CD4-positive, alpha-beta memory T cell (primary cell): ENCODE measurements at regions of chr12 and their contacts with region 1.

Region 1: GRCh38 chr12:112382232-112382796 is at the start of gene HECTD4:
- DNase-seq: peak; percentile 87 to 91 (median 88)
- H3K4me3 ChIP-seq: peak within 1 kb of the TSS; percentile 73 to 94
- H3K4me3 Mint-ChIP-seq: peak within 1 kb of the TSS; percentile 92 to 96 (median 96)
- H3K27ac ChIP-seq: peak within 1 kb of the TSS; percentile 59
- H3K27ac Mint-ChIP-seq: peak within 1 kb of the TSS; percentile 86 to 95 (median 94)
- H3K4me1 ChIP-seq: peaks cover 18% of the 10 kb centered on the region
- H3K4me1 Mint-ChIP-seq: peaks cover 18 to 28% (median 24%) of the 10 kb centered on the region in 4 donors
- H3K27me3 ChIP-seq: no peaks in the 10 kb centered on the region
- H3K27me3 Mint-ChIP-seq: peaks cover 0 to under 1% of the 10 kb centered on the region in 2 donors
- total RNA-seq, gene HECTD4: 51.8 to 61.3 TPM

Region 2: DNA sequence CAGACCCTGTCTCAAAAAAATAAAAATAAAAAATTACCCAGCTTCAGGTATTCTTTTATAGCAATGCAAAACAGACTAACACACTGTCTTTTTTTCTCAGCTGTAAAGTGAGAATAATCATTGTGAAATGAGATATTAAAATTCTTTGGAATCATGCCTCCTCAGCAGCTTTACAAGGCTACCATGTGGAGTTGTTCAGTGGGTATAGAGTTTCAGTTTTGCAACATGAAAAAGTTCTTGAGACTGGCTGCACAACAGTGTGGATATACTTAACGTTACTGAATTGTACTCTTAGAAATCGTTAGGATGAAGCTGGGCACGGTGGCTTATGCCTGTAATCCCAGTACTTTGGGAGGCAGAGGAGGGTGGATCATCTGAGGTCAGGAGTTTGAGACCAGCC is 556.0 kb before region 1 on chr12:
- CTCF ChIA-PET with region 1: interaction called, 5 read pairs
- POLR2A ChIA-PET with region 1: no interaction called
- intact Hi-C with region 1: loop called (anchors 1 kb)
- DNase-seq: no peak
- H3K4me3 ChIP-seq: no peak overlapping the region
- H3K4me3 Mint-ChIP-seq: no peak overlapping the region
- H3K27ac ChIP-seq: no peak overlapping the region
- H3K27ac Mint-ChIP-seq: no peak overlapping the region
- H3K4me1 ChIP-seq: no peaks in the 10 kb centered on the region
- H3K4me1 Mint-ChIP-seq: peaks cover 0 to 4% (median 0%) of the 10 kb centered on the region in 4 donors
- H3K27me3 ChIP-seq: no peaks in the 10 kb centered on the region
- H3K27me3 Mint-ChIP-seq: peaks cover 3 to 23% of the 10 kb centered on the region in 2 donors

Region 3: GRCh38 chr12:111942557-111942956 is 439.8 kb before region 1 on chr12:
- CTCF ChIA-PET with region 1: no interaction called
- POLR2A ChIA-PET with region 1: no interaction called
- intact Hi-C with region 1: loop called (anchors 1 kb)
- DNase-seq: no peak
- H3K4me3 ChIP-seq: no peak overlapping the region
- H3K4me3 Mint-ChIP-seq: no peak overlapping the region
- H3K27ac ChIP-seq: no peak overlapping the region
- H3K27ac Mint-ChIP-seq: peak overlapping the region in 1 of 7 donors; percentile 46
- H3K4me1 ChIP-seq: peaks cover 16% of the 10 kb centered on the region
- H3K4me1 Mint-ChIP-seq: peaks cover 8 to 17% (median 11%) of the 10 kb centered on the region in 4 donors
- H3K27me3 ChIP-seq: no peaks in the 10 kb centered on the region
- H3K27me3 Mint-ChIP-seq: no peaks in the 10 kb centered on the region

Region 4: GRCh38 chr12:112108201-112109079 is 273.9 kb before region 1 on chr12 and contains the start of gene NAA25:
- CTCF ChIA-PET with region 1: no interaction called
- POLR2A ChIA-PET with region 1: no interaction called
- intact Hi-C with region 1: loop called (anchors 10 kb)
- DNase-seq: peak; percentile 84 to 86 (median 84)
- H3K4me3 ChIP-seq: peak within 1 kb of the TSS; percentile 97 to 99
- H3K4me3 Mint-ChIP-seq: peak within 1 kb of the TSS; percentile 97 to 99 (median 98)
- H3K27ac ChIP-seq: peak within 1 kb of the TSS; percentile 94
- H3K27ac Mint-ChIP-seq: peak within 1 kb of the TSS; percentile 96 to 99 (median 97)
- H3K4me1 ChIP-seq: peaks cover 38% of the 10 kb centered on the region
- H3K4me1 Mint-ChIP-seq: peaks cover 29 to 57% (median 44%) of the 10 kb centered on the region in 4 donors
- H3K27me3 ChIP-seq: no peaks in the 10 kb centered on the region
- H3K27me3 Mint-ChIP-seq: no peaks in the 10 kb centered on the region
- total RNA-seq, gene NAA25: 28.7 to 35.3 TPM

Region 5: DNA sequence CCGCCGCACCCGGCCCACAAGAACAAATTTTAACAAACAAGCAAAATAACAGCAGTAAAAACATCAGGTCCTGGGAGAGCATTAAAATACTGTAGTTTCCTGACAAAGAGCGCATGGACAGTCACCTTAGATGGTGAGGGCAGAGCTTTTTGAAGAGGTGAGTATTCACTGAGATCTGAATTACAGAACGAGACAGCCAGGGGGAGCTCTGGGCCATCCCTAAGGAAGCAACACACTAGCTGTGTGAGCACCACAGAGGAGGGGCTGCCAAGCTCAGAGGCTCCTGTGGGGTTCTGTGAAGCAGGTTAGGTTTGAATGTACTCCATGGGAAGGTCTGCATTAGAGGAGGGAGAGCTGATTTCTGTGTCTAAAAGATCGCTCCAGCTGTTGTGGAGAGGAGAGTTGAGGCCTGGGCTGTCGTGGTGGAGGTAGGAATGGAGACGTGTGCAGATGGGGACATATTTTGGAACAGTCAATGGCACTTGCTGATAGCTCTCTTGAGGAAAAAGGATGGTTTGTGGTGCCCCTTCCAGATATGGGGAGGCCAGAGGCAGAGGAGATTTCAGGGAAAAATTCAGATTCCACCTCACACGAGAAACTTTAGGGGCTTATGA is 184.1 kb before region 1 on chr12:
- CTCF ChIA-PET with region 1: interaction called, 65 read pairs
- POLR2A ChIA-PET with region 1: interaction called, 6 read pairs
- intact Hi-C with region 1: no loop called
- DNase-seq: peak in 4 of 5 donors; percentile 21 to 32 (median 26)
- H3K4me3 ChIP-seq: no peak overlapping the region
- H3K4me3 Mint-ChIP-seq: no peak overlapping the region
- H3K27ac ChIP-seq: no peak overlapping the region
- H3K27ac Mint-ChIP-seq: peak overlapping the region in 2 of 7 donors; percentile 28 to 52
- H3K4me1 ChIP-seq: no peaks in the 10 kb centered on the region
- H3K4me1 Mint-ChIP-seq: peaks cover 0 to 3% (median under 1%) of the 10 kb centered on the region in 4 donors
- H3K27me3 ChIP-seq: no peaks in the 10 kb centered on the region
- H3K27me3 Mint-ChIP-seq: no peaks in the 10 kb centered on the region

Region 6: DNA sequence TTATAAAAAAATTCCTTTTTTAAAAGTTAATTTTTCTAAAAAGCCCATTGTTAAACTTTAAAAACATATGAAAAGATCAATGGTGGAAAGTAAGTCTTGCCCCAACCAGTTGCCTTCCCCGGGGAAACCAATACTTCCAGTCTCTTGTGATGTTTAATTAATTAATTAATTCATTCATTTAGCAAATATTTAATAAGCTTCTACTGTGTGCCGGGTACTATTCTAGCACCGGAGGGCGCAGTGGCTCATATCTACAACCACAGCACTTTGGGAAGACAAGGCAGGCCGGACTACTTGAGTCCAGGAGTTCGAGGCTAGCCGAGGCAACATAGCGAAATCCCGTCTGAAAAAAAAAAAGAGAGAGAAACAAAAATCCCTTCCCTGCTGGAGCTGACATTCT is 87.5 kb before region 1 on chr12:
- CTCF ChIA-PET with region 1: interaction called, 5 read pairs
- POLR2A ChIA-PET with region 1: no interaction called
- intact Hi-C with region 1: loop called (anchors 1 kb)
- DNase-seq: no peak
- H3K4me3 ChIP-seq: no peak overlapping the region
- H3K4me3 Mint-ChIP-seq: no peak overlapping the region
- H3K27ac ChIP-seq: no peak overlapping the region
- H3K27ac Mint-ChIP-seq: no peak overlapping the region
- H3K4me1 ChIP-seq: no peaks in the 10 kb centered on the region
- H3K4me1 Mint-ChIP-seq: peaks cover 5 to 7% (median 6%) of the 10 kb centered on the region in 4 donors
- H3K27me3 ChIP-seq: no peaks in the 10 kb centered on the region
- H3K27me3 Mint-ChIP-seq: no peaks in the 10 kb centered on the region

Region 7: GRCh38 chr12:112368856-112369255 is 13.5 kb before region 1 on chr12:
- CTCF ChIA-PET with region 1: no interaction called
- POLR2A ChIA-PET with region 1: no interaction called
- intact Hi-C with region 1: no loop called
- DNase-seq: no peak
- H3K4me3 ChIP-seq: no peak overlapping the region
- H3K4me3 Mint-ChIP-seq: no peak overlapping the region
- H3K27ac ChIP-seq: no peak overlapping the region
- H3K27ac Mint-ChIP-seq: no peak overlapping the region
- H3K4me1 ChIP-seq: no peaks in the 10 kb centered on the region
- H3K4me1 Mint-ChIP-seq: peaks cover 12 to 20% (median 13%) of the 10 kb centered on the region in 4 donors
- H3K27me3 ChIP-seq: no peaks in the 10 kb centered on the region
- H3K27me3 Mint-ChIP-seq: no peaks in the 10 kb centered on the region

Region 8: DNA sequence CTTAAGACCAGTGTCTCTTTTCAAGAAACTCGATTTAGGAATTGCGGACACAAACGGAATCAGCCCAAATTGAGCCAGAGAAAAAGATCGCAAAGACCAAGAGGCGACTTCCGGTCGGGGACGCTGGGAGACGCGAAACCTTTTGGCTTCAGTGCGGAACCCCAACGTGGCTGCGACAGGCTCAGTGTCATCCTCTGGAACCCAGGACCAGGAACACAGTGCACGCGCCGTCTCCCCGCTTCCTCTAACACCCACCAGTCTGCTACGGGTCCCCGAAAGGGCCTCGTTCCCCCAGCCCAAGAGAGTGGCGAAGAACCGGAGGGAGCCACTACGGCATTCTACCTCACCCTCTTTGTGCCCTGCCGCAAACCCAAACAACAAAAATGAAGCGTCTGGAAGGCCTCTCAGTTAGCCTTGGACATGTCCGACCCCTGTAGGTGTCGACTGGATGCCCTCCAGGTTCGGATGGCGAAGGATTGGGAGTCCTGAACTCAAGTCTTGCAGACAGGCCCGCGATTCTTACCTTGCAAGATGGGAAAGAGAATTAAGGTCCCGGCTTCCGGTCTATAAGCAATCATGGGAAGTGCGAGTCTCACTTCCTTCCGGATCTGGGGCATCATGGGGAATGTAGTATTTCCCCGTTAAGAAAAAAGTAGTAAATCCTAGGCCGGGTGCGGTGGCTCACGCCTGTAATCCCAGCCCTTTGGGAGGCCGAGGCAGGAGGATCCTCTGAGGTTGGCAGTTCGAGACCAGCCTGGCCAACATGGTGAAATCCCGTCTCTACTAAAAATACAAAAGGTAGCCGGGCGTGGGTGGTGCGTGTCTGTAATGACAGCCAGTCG is 27.0 kb after region 1 on chr12 and contains the start of gene RPL6:
- CTCF ChIA-PET with region 1: no interaction called
- POLR2A ChIA-PET with region 1: interaction called, 3 read pairs
- intact Hi-C with region 1: loop called (anchors 1 kb)
- DNase-seq: peak; percentile 83 to 89 (median 84)
- H3K4me3 ChIP-seq: peak within 1 kb of the TSS; percentile 82 to 89
- H3K4me3 Mint-ChIP-seq: peak within 1 kb of the TSS; percentile 98 to 100 (median 100)
- H3K27ac ChIP-seq: peak within 1 kb of the TSS; percentile 89
- H3K27ac Mint-ChIP-seq: peak within 1 kb of the TSS; percentile 90 to 100 (median 100)
- H3K4me1 ChIP-seq: peaks cover 26% of the 10 kb centered on the region
- H3K4me1 Mint-ChIP-seq: peaks cover 19 to 46% (median 28%) of the 10 kb centered on the region in 4 donors
- H3K27me3 ChIP-seq: no peaks in the 10 kb centered on the region
- H3K27me3 Mint-ChIP-seq: no peaks in the 10 kb centered on the region
- total RNA-seq, gene RPL6: 1,625 to 1,665 TPM